CD8-positive, alpha-beta T cell (primary cell): ENCODE measurements at regions of chr21 and their contacts with region 1.

Region 1: DNA sequence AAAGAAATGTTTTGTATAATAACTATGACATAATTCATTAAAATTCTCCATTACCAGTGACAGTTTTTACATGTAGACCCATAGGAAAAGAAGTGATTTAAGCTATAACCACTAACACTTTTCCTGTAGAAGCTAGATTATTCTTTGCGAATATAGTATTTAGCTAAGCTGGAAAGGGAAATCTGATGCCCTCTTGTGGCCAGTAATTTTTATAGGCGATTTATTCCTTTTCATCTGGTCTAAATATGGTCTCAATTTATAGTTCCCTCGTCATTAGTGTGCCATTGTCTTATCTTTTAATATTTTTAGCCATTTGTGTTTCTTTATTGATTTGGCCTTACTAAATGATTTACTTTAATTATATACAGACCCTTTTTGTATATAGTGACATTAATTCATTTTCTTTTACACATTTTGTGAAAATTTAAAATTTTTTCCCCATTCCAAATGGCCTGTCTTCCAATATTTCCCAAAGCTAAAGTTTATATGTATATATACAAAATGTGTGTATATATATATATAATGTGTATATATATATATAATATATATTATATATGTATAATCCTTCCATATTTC is 26.7 kb downstream of the BTG3 start:
- DNase-seq: peak in 3 of 9 experiments; percentile 10 to 64 (median 50)
- ATAC-seq: peak; percentile 34
- H3K4me3 ChIP-seq: no peak overlapping the region
- H3K4me3 Mint-ChIP-seq: no peak overlapping the region
- H3K27ac ChIP-seq: no peak overlapping the region
- H3K27ac Mint-ChIP-seq: no peak overlapping the region
- H3K4me1 ChIP-seq: no peaks in the 10 kb centered on the region
- H3K4me1 Mint-ChIP-seq: no peaks in the 10 kb centered on the region
- H3K27me3 ChIP-seq: no peaks in the 10 kb centered on the region
- H3K27me3 Mint-ChIP-seq: no peaks in the 10 kb centered on the region
- CTCF ChIP-seq: peak; percentile 68

Region 2: GRCh38 chr21:17387030-17387617 is 198.8 kb before region 1 on chr21:
- CTCF ChIA-PET with region 1: interaction called, 53 read pairs
- POLR2A ChIA-PET with region 1: no interaction called
- intact Hi-C with region 1: loop called (anchors 1 kb)
- DNase-seq: peak in 6 of 9 experiments; percentile 18 to 65 (median 52)
- ATAC-seq: peak; percentile 55
- H3K4me3 ChIP-seq: no peak overlapping the region
- H3K4me3 Mint-ChIP-seq: no peak overlapping the region
- H3K27ac ChIP-seq: no peak overlapping the region
- H3K27ac Mint-ChIP-seq: no peak overlapping the region
- H3K4me1 ChIP-seq: no peaks in the 10 kb centered on the region
- H3K4me1 Mint-ChIP-seq: no peaks in the 10 kb centered on the region
- H3K27me3 ChIP-seq: no peaks in the 10 kb centered on the region
- H3K27me3 Mint-ChIP-seq: peaks cover 4% of the 10 kb centered on the region
- CTCF ChIP-seq: peak; percentile 94

Region 3: DNA sequence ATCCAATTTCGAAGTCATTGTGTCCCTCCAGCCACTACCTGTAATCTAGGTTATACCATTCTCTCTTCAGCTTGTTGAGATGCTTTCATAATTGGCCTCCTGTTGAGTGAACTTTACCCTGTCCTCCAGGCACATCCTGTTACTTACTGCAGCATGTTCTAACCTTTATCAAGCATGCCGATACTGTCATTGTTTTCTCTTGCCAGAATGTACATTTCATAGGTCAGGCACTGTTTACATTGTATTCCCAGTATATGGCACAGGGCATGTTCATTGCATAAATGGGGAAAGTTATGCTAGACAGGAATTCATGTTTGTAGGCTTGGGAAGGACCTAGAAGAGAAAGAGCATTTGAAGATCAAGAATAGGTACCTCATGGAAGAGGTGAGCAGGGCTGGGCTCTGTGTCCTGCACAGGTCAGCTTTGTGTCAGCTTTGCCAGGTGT is 62.9 kb before region 1 on chr21:
- CTCF ChIA-PET with region 1: no interaction called
- POLR2A ChIA-PET with region 1: no interaction called
- intact Hi-C with region 1: no loop called
- DNase-seq: no peak
- ATAC-seq: no peak
- H3K4me3 ChIP-seq: no peak overlapping the region
- H3K4me3 Mint-ChIP-seq: no peak overlapping the region
- H3K27ac ChIP-seq: no peak overlapping the region
- H3K27ac Mint-ChIP-seq: no peak overlapping the region
- H3K4me1 ChIP-seq: no peaks in the 10 kb centered on the region
- H3K4me1 Mint-ChIP-seq: no peaks in the 10 kb centered on the region
- H3K27me3 ChIP-seq: no peaks in the 10 kb centered on the region
- H3K27me3 Mint-ChIP-seq: peaks cover 19% of the 10 kb centered on the region
- CTCF ChIP-seq: no peak